Right ventricle myocardium inferior (tissue), 1 donor: ENCODE measurements at regions of chr1 and their contacts with region 1.

Region 1: GRCh38 chr1:172931761-172932160 is 119.0 kb downstream of the TNFSF18 start:
- DNase-seq: no peak
- ATAC-seq: no peak

Region 2: GRCh38 chr1:172895050-172895460 is 36.7 kb before region 1 on chr1:
- intact Hi-C with region 1: loop called (anchors 5 kb)
- DNase-seq: no peak
- ATAC-seq: no peak